ACHN (cell line): ENCODE measurements at regions of chr1 and their contacts with region 1.

Region 1: DNA sequence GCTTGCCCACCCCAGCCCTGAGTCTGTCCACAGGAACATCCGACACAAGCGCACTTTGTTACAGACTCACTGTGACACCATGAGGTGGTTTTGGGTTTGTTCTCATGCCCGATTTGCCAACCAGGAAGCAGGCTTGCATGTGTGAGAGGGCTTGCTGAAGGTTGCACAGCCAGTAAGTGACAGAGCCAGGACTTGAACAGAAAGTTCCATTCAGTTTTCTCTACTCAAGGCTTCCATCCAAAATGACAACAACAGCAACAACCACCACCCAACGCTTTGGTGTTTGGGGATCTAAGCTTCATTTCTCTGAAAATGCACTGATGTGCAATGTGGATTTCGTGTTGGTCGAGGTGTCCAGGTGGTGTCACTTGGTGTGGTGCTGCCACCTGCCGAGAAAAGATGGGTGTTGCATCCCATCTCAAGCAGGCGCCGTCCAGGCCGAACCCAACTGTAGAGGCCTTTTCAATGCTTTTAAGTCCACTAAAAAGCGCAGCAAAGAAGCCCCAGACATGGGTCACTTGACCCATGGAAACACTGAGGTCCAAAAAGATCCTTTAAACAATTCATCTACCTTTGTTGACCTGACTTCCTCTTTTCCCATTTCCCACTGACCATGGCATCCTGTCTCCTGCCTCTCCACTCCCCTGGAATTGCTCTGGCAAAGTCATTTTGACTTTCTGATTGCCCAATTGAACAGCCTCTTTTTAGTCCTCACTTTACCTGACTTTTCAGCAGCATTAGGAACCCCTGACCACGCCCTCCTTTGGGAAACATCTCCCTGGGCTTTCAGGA is 12.2 kb downstream of the CITED4 start:
- DNase-seq: peak; percentile 46

Region 2: DNA sequence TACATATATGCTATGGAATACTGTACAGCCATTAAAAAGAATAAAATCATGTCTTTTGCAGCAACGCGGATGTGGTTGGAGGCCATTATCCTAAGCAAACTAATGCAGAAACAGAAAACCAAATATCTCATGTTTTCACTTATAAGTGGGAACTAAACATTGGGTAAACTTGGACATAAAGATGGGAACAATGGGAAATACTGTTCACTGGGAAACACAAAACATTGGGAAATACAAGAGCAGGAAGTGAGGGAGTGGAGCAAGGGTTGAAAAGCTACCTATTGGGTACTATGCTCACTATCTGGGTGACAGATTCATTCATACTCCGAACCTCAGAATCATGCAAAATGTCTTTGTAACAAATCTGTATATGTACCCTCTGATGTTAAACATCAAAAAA is 735.6 kb before region 1 on chr1:
- in situ Hi-C with region 1: no loop called
- DNase-seq: no peak

Region 3: GRCh38 chr1:40783001-40783905 is 66.7 kb before region 1 on chr1 and contains the start of gene KCNQ4:
- in situ Hi-C with region 1: loop called (anchors 10 kb)
- DNase-seq: peak; percentile 45